GM12878 (cell line): ENCODE measurements at regions of chr2 and their contacts with region 1.

Region 1: DNA sequence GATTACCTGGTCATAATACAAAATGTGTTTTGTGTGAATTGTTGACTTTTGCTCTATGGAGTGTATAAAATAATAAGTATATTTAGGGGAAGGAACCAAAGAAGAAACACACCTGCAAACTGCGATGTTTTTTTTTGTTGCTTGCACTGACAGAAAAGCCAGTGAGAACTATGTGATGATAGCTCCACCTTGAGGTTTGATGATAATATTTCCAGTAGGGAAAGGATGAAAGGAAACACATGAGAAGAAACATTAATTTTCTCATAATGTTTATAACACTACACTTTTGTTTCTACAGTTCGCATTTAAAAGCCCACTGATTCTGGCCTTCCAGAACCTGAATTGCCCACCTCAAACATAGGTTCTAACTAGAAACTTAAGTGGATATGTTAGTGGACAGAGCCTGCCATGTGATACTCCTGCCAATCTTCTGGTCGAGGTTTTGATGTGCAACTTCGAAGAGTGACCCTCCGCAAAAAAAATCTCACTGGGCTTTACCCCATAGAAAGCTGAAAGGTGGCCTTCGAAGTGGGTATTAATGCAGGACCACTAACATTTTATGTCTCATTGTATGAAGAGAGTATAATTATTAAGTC is 476.4 kb upstream of the SPHKAP start:
- DNase-seq: peak; percentile 3
- ATAC-seq: peak; percentile 78
- H3K4me3 ChIP-seq: no peak overlapping the region
- H3K27ac ChIP-seq: no peak overlapping the region
- H3K4me1 ChIP-seq: no peaks in the 10 kb centered on the region
- H3K27me3 ChIP-seq: no peaks in the 10 kb centered on the region
- CTCF ChIP-seq: peak; percentile 26 to 68 (median 43); a peak in 4 of 6 replicates
- EP300 ChIP-seq: no peak
- POLR2A ChIP-seq: no peak
- RAD21 ChIP-seq: peak; percentile 88

Region 2: DNA sequence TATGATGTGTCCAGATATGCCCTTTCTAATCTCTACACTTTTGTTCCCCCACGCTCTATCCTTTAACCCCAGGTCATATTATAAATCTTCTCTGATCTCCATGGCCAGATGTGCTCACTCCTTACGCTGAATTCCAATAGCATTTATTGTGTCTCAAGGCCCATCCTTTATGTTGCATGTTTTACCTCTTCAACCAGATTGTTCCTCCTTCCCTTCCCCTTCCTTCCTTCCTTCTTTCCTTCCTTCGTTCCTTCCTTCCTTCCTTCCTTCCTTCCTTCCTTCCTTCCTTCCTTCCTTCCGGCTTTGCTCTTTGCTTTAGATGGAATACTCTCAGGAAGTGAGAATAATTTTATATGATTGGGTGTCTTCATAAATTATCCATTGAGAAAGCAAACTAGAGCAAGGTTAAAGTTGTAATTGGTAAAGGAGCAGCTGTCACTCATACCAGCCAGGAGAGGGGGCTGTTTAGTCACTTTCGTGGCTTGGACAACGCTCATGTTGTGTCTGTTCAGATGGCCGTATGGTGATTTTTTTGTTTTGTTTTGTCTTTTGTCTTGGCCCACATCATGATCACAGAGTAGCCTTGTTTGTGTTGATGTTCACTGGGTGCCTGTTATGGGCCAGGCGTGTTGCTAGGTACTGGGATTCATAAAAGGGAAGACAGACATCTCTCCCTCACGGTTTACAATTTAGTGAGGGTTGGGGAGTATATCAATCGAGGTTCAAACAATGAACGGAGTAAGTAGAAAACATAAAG is 718.5 kb before region 1 on chr2:
- CTCF ChIA-PET with region 1: interaction called, 7 read pairs
- POLR2A ChIA-PET with region 1: interaction called, 4 read pairs
- RAD21 ChIA-PET with region 1: no interaction called
- SMC1A ChIA-PET with region 1: interaction called, 3 read pairs
- in situ Hi-C with region 1: loop called (anchors 25 kb)
- intact Hi-C with region 1: loop called (anchors 5 kb)
- DNase-seq: no peak
- ATAC-seq: peak; percentile 90
- H3K4me3 ChIP-seq: no peak overlapping the region
- H3K27ac ChIP-seq: no peak overlapping the region
- H3K4me1 ChIP-seq: no peaks in the 10 kb centered on the region
- H3K27me3 ChIP-seq: no peaks in the 10 kb centered on the region; a peak in 1 of 4 replicates
- CTCF ChIP-seq: peak; percentile 56 to 64 (median 62)
- EP300 ChIP-seq: no peak
- POLR2A ChIP-seq: no peak
- RAD21 ChIP-seq: peak; percentile 56

Region 3: GRCh38 chr2:228039752-228040534 is 618.0 kb before region 1 on chr2:
- CTCF ChIA-PET with region 1: interaction called, 10 read pairs
- POLR2A ChIA-PET with region 1: no interaction called
- RAD21 ChIA-PET with region 1: no interaction called
- SMC1A ChIA-PET with region 1: interaction called, 3 read pairs
- in situ Hi-C with region 1: no loop called
- intact Hi-C with region 1: loop called (anchors 2 kb)
- DNase-seq: no peak
- ATAC-seq: peak; percentile 87
- H3K4me3 ChIP-seq: no peak overlapping the region
- H3K27ac ChIP-seq: no peak overlapping the region
- H3K4me1 ChIP-seq: no peaks in the 10 kb centered on the region
- H3K27me3 ChIP-seq: no peaks in the 10 kb centered on the region
- CTCF ChIP-seq: peak; percentile 62 to 64 (median 62); a peak in 5 of 6 replicates
- EP300 ChIP-seq: no peak
- POLR2A ChIP-seq: no peak
- RAD21 ChIP-seq: peak; percentile 59

Region 4: DNA sequence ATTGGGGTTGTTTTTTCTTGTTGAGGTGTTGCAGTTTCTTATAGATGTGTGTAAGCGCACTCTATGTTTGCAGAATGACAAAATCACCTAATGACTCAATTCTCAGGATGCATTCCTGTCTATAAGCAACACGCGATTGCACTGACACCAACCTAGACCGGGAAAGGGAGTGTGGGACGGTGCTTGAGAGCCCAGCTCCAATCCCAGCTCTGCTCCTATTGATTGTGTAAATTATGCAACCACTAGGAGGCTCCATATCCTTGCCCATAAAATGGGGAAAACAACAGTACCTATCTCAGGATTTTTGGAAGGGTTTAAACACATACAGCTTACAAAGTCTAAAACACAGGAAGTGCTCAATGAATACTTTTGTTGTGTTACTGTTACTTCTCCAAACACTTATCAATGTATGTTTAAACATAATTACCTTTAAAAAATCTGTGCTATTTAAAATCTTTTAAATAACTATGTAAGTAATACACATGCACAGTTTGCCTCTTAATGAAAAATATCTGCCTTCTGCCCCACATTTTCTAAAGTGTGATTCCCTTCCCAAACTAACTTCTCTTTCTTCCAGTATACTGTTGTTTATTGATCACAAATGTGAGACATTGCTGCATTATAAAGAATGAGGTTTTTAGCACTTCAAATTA is 608.9 kb before region 1 on chr2:
- CTCF ChIA-PET with region 1: interaction called, 7 read pairs
- POLR2A ChIA-PET with region 1: no interaction called
- RAD21 ChIA-PET with region 1: interaction called, 9 read pairs
- SMC1A ChIA-PET with region 1: no interaction called
- in situ Hi-C with region 1: no loop called
- intact Hi-C with region 1: loop called (anchors 2 kb)
- DNase-seq: no peak
- ATAC-seq: peak; percentile 76
- H3K4me3 ChIP-seq: no peak overlapping the region
- H3K27ac ChIP-seq: no peak overlapping the region
- H3K4me1 ChIP-seq: no peaks in the 10 kb centered on the region
- H3K27me3 ChIP-seq: no peaks in the 10 kb centered on the region
- CTCF ChIP-seq: peak; percentile 44 to 61 (median 50); a peak in 4 of 6 replicates
- EP300 ChIP-seq: no peak
- POLR2A ChIP-seq: no peak
- RAD21 ChIP-seq: peak; percentile 70

Region 5: DNA sequence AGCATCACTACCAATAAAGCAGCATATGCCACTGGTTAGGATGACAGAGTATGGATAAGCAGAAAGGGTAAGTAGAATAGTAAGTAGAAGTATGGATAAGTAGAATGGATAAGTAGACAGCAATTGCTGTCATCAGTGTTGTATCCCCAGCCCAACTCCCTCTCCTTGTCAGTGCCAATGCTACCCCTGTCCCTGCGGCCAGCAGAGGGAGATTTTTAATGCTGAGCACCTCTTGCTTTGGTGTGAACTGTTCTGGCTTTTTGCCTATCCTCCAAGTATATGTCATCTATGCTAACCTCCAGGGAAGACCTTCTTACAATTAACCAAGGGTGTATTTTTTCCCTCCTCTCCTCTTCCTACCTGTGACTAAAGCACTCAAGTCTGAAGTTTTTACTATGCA is 339.7 kb before region 1 on chr2:
- CTCF ChIA-PET with region 1: interaction called, 6 read pairs
- POLR2A ChIA-PET with region 1: no interaction called
- RAD21 ChIA-PET with region 1: interaction called, 4 read pairs
- SMC1A ChIA-PET with region 1: interaction called, 5 read pairs
- in situ Hi-C with region 1: no loop called
- intact Hi-C with region 1: loop called (anchors 1 kb)
- DNase-seq: no peak
- ATAC-seq: peak; percentile 88
- H3K4me3 ChIP-seq: no peak overlapping the region
- H3K27ac ChIP-seq: no peak overlapping the region
- H3K4me1 ChIP-seq: no peaks in the 10 kb centered on the region
- H3K27me3 ChIP-seq: no peaks in the 10 kb centered on the region
- CTCF ChIP-seq: peak; percentile 36 to 48 (median 45); a peak in 4 of 6 replicates
- EP300 ChIP-seq: no peak
- POLR2A ChIP-seq: no peak
- RAD21 ChIP-seq: peak; percentile 23; the same call in 1 of the 2 replicates

Region 6: DNA sequence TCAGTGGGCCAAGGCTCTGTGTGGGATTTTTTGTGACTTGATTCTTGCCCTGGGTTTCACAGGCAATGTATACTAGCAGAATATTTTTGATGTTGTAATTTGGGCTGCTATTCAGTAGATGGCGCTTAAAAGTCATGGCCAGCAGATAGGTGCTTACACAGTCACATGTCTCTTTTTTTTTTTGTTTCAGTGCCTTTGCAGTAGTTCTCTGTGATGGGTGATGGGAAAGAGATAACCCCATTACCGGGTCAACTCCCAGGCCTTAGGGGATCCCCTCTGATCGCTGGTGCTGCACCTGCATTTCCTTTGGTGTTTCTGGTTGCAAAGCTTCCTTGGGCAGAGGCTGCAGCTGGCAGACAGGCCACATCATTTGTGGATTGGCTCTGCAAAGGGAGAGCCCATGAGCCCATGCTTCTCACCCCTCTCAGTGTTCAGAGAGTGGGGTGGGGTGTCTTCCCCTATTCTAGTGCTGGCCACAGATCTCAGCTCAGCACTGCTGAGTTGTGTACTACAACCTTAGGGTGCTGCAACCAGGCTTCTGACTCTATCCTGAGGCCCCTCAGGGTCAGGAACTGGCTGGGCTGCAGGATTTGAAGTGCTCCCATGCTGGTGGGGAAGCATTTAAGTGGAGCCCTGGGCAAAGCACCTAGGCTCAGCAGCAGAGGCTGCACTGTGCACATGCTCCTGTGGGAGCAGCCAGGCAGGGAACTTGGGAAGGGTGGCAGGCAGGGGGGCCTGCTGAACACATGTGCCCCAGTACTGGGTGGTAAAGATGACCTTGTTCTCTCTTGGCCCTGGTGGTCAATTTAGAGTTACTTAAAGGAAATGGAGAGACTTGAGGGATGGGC is 256.6 kb before region 1 on chr2:
- CTCF ChIA-PET with region 1: interaction called, 3 read pairs
- POLR2A ChIA-PET with region 1: no interaction called
- RAD21 ChIA-PET with region 1: interaction called, 3 read pairs
- SMC1A ChIA-PET with region 1: no interaction called
- in situ Hi-C with region 1: no loop called
- intact Hi-C with region 1: loop called (anchors 1 kb)
- DNase-seq: no peak
- ATAC-seq: peak; percentile 74
- H3K4me3 ChIP-seq: no peak overlapping the region
- H3K27ac ChIP-seq: no peak overlapping the region
- H3K4me1 ChIP-seq: no peaks in the 10 kb centered on the region
- H3K27me3 ChIP-seq: no peaks in the 10 kb centered on the region
- CTCF ChIP-seq: peak; percentile 26 to 42 (median 30); a peak in 4 of 6 replicates
- EP300 ChIP-seq: no peak
- POLR2A ChIP-seq: no peak
- RAD21 ChIP-seq: peak; percentile 76

Region 7: GRCh38 chr2:229141424-229142025 is 483.6 kb after region 1 on chr2:
- CTCF ChIA-PET with region 1: no interaction called
- POLR2A ChIA-PET with region 1: no interaction called
- RAD21 ChIA-PET with region 1: no interaction called
- SMC1A ChIA-PET with region 1: no interaction called
- in situ Hi-C with region 1: no loop called
- intact Hi-C with region 1: no loop called
- DNase-seq: no peak
- ATAC-seq: no peak
- H3K4me3 ChIP-seq: no peak overlapping the region
- H3K27ac ChIP-seq: no peak overlapping the region
- H3K4me1 ChIP-seq: no peaks in the 10 kb centered on the region
- H3K27me3 ChIP-seq: no peaks in the 10 kb centered on the region
- CTCF ChIP-seq: no peak
- EP300 ChIP-seq: no peak
- POLR2A ChIP-seq: no peak
- RAD21 ChIP-seq: no peak